IMR-90 (cell line): ENCODE measurements at regions of chr4 and their contacts with region 1.

Region 1: GRCh38 chr4:113394730-113395530 is 345.5 kb downstream of the ANK2 start:
- DNase-seq: peak; percentile 88
- ATAC-seq: peak; percentile 89
- H3K4me3 ChIP-seq: no peak overlapping the region
- H3K27ac ChIP-seq: no peak overlapping the region
- H3K4me1 ChIP-seq: peaks cover 3% of the 10 kb centered on the region; the same call in 1 of the 2 replicates
- H3K27me3 ChIP-seq: no peaks in the 10 kb centered on the region
- CTCF ChIP-seq: peak; percentile 88
- POLR2A ChIP-seq: peak; percentile 41; the same call in 1 of the 2 replicates
- RAD21 ChIP-seq: peak; percentile 96

Region 2: DNA sequence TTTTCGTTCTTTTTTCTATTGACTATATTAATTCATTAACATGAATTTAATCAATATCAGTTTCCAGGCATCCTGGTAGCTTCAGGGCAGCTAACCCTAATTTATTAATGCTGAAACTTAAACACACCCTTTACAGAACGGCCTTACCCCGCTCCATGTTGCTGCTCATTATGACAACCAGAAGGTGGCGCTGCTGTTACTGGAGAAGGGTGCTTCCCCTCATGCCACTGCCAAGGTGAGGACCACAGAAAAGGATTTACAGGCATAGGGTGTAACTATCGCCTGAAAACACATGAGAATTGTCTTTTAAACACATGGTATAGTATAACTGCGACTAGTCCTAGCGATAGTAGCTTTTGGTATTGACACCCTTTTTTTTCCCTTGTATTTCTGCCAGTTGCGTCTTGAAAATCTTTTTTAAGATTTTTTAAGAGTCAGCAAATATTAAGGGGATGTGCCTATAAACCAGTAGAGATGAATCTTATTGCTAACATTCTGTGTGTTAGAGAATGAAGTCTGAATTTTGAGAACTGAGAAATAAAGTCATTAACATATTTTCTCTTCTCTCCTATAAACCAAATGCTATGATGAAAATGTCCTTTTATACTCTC is 116.5 kb before region 1 on chr4:
- CTCF ChIA-PET with region 1: no interaction called
- POLR2A ChIA-PET with region 1: no interaction called
- dilution Hi-C with region 1: no loop called
- in situ Hi-C with region 1: no loop called
- intact Hi-C with region 1: loop called (anchors 1 kb)
- DNase-seq: peak; percentile 79
- ATAC-seq: peak; percentile 99
- H3K4me3 ChIP-seq: no peak overlapping the region
- H3K27ac ChIP-seq: no peak overlapping the region
- H3K4me1 ChIP-seq: no peaks in the 10 kb centered on the region
- H3K27me3 ChIP-seq: peaks cover 7% of the 10 kb centered on the region
- CTCF ChIP-seq: peak; percentile 85
- POLR2A ChIP-seq: no peak
- RAD21 ChIP-seq: peak; percentile 88

Region 3: GRCh38 chr4:113445286-113445685 is 50.4 kb after region 1 on chr4:
- CTCF ChIA-PET with region 1: no interaction called
- POLR2A ChIA-PET with region 1: no interaction called
- dilution Hi-C with region 1: no loop called
- in situ Hi-C with region 1: no loop called
- intact Hi-C with region 1: no loop called
- DNase-seq: peak; percentile 94
- ATAC-seq: peak; percentile 53
- H3K4me3 ChIP-seq: no peak overlapping the region
- H3K27ac ChIP-seq: peak overlapping the region; percentile 13; the same call in 1 of the 2 replicates
- H3K4me1 ChIP-seq: peaks cover 8% of the 10 kb centered on the region
- H3K27me3 ChIP-seq: no peaks in the 10 kb centered on the region
- CTCF ChIP-seq: no peak
- POLR2A ChIP-seq: no peak
- RAD21 ChIP-seq: no peak

Region 4: DNA sequence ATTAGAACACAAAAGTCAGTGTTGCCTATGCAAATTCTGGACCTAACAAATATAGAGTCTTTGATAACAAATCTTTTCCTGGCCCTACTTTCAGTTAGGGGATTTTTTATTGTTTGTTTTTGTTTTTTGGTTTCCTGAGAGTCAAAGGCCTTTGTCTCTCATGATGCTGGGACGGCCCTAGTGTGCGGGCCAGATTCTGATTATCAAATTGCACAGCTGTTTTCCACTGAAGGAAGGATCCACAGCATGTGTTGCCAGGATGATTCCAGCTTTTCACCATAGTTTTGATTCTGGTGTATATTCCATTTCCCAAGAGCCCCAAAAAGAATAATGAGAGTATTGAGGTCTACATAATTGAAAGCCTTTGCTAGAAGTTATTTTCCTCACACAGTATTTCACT is 118.5 kb after region 1 on chr4:
- CTCF ChIA-PET with region 1: no interaction called
- POLR2A ChIA-PET with region 1: no interaction called
- dilution Hi-C with region 1: no loop called
- in situ Hi-C with region 1: no loop called
- intact Hi-C with region 1: loop called (anchors 10 kb)
- DNase-seq: no peak
- ATAC-seq: no peak
- H3K4me3 ChIP-seq: no peak overlapping the region
- H3K27ac ChIP-seq: no peak overlapping the region
- H3K4me1 ChIP-seq: no peaks in the 10 kb centered on the region
- H3K27me3 ChIP-seq: no peaks in the 10 kb centered on the region
- CTCF ChIP-seq: no peak
- POLR2A ChIP-seq: no peak
- RAD21 ChIP-seq: no peak

Region 5: DNA sequence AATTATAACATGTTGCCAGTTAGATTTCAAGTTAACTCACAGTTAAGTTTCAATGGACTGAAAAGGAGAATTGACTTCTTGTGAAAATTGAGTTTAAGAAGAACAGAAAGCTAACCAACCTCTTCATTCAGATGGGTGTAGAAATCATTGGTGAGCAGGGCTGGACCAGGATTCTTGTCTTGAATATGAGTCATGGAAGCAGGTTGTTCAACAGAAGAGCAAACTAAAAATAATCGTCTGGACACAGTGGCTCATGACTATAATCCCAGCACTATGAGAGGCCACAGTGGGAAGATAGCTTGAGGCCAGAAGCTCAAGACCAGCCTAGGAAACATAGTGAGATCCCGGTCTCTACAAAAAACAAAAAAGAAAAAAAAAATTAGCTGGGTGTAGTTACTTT is 486.3 kb after region 1 on chr4:
- CTCF ChIA-PET with region 1: no interaction called
- POLR2A ChIA-PET with region 1: no interaction called
- dilution Hi-C with region 1: no loop called
- in situ Hi-C with region 1: no loop called
- intact Hi-C with region 1: loop called (anchors 5 kb)
- DNase-seq: peak; percentile 62
- ATAC-seq: peak; percentile 52; the same call in 1 of the 2 replicates
- H3K4me3 ChIP-seq: no peak overlapping the region
- H3K27ac ChIP-seq: no peak overlapping the region
- H3K4me1 ChIP-seq: peaks cover 4% of the 10 kb centered on the region
- H3K27me3 ChIP-seq: no peaks in the 10 kb centered on the region
- CTCF ChIP-seq: no peak
- POLR2A ChIP-seq: no peak
- RAD21 ChIP-seq: no peak

Region 6: DNA sequence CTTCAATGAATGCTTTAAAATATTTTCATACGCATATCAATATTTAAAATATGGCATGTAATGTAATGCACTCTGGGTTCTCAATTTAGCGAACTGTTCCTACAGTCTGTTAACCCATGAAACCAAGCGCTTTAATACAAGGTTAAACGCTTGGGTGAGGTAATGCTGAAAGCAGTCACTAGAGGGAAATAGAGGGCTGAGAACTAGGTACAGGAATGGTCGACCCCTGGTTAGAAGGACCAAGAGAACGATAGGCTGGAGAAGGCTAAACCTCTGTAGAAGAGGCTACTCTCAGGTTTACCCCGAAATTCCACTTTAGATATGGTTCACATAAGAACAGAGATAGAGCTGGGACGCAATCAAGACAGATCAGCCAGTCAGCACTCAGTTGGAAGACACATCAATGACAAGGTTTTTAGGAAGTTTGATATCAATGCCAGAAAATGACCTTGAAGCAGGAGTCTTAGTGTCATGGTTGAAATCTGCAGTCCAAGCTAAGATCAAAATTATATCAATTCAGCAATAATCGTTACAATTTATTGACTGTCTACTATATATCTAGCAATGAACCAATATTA is 557.6 kb after region 1 on chr4:
- CTCF ChIA-PET with region 1: interaction called, 4 read pairs
- POLR2A ChIA-PET with region 1: no interaction called
- dilution Hi-C with region 1: no loop called
- in situ Hi-C with region 1: no loop called
- intact Hi-C with region 1: loop called (anchors 5 kb)
- DNase-seq: peak; percentile 62
- ATAC-seq: peak; percentile 63
- H3K4me3 ChIP-seq: no peak overlapping the region
- H3K27ac ChIP-seq: peak overlapping the region; percentile 31; the same call in 1 of the 2 replicates
- H3K4me1 ChIP-seq: peaks cover 9% of the 10 kb centered on the region
- H3K27me3 ChIP-seq: no peaks in the 10 kb centered on the region
- CTCF ChIP-seq: peak; percentile 71
- POLR2A ChIP-seq: no peak
- RAD21 ChIP-seq: peak; percentile 77

Region 7: DNA sequence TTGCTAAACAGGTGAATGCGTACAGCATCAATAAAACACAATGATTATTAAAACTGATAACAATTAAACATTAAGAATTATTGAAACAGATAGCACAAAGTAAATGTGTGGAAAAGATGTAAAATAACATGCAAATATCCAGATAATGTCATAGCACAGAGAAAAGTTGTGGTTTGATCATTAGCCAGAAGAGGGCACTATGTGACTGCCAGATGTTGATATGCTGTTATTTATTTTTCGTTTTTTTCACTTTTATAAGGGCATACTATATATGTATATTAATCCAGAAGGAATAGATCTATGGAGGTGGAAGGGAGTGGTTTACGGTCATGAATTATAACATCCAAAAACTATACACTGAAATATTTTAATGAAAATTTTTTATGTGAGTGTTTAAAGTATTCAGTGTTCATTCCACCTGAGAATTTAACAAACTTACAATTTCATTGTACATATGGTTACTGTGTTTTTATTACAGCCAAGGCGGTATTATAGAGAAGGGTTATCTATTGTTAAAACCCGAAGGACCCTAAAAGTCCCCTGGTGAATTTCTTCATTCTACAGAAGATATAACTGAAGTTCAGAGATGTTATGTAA is 991.8 kb after region 1 on chr4:
- CTCF ChIA-PET with region 1: interaction called, 4 read pairs
- POLR2A ChIA-PET with region 1: no interaction called
- dilution Hi-C with region 1: no loop called
- in situ Hi-C with region 1: loop called (anchors 5 kb)
- intact Hi-C with region 1: loop called (anchors 1 kb)
- DNase-seq: peak; percentile 60
- ATAC-seq: peak; percentile 51; the same call in 1 of the 2 replicates
- H3K4me3 ChIP-seq: no peak overlapping the region
- H3K27ac ChIP-seq: no peak overlapping the region
- H3K4me1 ChIP-seq: peaks cover 4% of the 10 kb centered on the region; the same call in 1 of the 2 replicates
- H3K27me3 ChIP-seq: peaks cover 18% of the 10 kb centered on the region
- CTCF ChIP-seq: peak; percentile 85
- POLR2A ChIP-seq: no peak
- RAD21 ChIP-seq: peak; percentile 85